Sciatic nerve (tissue), 2 donors: ENCODE measurements at regions of chr3 and their contacts with region 1.

Region 1: DNA sequence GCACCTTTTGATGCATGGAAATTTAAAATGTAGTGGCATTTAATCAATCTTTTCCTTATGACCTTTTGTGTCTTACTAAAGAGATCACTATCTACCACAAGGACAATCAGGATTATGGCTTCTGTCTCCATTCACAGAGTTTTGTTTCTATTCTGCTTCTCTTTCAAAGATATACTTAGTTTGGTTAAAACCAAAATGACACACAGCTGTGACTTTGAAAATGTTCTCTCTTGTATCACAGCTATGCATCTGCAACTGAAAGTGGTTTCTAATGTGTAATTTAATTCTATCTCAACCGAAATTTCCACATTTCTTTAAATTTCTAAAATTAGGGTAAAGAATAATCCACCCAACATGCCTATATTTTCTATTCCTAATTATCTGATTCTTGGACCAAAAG is 27.7 kb downstream of the HLTF start:
- DNase-seq: no peak
- ATAC-seq: no peak

Region 2: DNA sequence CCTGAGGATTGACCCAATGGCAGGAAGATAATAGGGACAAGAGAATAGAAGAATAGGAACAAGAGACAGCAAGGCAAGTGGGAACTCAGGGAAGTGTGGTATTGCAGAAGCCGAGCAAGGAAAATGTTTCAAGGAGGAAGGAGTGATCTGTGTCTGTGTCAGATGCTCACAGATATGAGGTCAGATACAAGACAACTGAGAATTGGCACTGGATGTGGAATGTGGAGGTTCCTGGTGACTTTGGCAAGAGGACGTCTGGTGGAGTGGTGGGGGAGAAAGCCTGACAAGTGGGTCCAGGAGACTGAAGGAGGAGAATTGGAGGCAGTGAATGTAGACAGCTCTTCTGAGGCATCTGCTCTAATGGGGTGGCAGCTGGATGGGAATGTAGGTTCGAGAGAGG is 43.2 kb before region 1 on chr3:
- intact Hi-C with region 1: loop called (anchors 2 kb)
- DNase-seq: no peak
- ATAC-seq: no peak

Region 3: DNA sequence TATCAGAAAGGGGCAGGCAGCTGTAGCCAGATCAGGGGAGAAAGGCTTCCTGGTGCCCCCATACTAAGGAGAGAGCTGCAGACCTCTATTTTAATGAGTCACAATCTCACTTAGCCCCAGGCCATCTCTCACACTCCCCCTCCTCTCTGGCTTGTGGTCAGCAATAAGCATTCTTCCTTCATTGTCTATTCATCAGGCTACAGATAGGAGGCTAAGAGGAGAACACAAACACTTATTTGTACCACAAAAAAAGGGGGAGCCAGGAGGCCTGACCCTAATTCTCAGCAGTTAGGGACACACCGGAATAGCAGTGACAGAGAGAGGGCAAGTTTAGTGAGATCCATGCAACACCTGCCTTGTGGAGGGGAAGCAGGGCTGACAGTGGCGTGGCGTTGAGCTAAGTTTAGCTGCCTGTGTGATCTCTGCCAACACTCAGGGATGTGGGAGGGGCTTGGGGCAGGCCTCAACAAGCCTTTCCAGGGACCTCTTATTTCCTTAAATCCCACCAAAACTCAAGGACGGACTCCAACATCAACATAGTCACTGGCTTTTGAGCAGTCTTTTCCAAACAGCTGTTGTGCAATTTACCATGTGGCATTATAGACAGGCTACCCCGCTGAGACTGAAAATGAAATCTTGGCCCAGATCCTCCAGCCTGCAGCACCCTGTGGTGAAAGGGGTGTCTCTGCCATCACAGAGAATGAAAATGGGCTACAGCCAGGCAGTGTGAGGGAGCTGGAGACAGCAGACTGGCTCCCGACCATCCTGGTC is 1157.6 kb after region 1 on chr3:
- intact Hi-C with region 1: no loop called
- DNase-seq: peak; percentile 72
- ATAC-seq: peak; percentile 90